ENCODE measurements at regions of chr12 and their contacts with region 1.

Region 1: DNA sequence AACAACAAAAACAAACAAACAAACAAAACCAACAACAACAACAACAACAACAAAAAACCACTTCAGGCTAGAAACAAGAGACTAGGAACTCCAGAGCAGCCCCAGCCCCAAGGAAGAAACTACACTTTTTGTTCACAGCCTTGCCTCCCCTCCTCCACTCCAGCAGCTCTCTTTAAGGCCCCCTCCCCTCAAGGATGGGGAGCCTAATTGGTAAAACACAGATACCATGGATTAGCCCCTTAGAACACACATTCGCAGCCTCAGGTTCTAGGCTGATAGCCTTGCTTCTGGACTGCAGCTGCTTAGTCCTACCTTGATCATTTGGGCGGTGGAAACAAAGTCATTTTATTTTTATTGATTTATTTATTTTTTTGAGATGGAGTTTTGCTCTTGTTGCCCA is 11.9 kb upstream of the AVIL start:
- DNase-seq: no peak
- H3K4me3 ChIP-seq: no peak overlapping the region
- H3K27ac ChIP-seq: peak overlapping the region in 1 of 4 donors; percentile 67
- H3K4me1 ChIP-seq: peaks cover 30 to 71% (median 65%) of the 10 kb centered on the region in 3 donors
- H3K27me3 ChIP-seq: no peaks in the 10 kb centered on the region
- CTCF ChIP-seq: no peak
- POLR2A ChIP-seq: no peak

Region 2: GRCh38 chr12:57795354-57795753 is 35.0 kb before region 1 on chr12:
- intact Hi-C with region 1: no loop called
- DNase-seq: no peak
- H3K4me3 ChIP-seq: no peak overlapping the region
- H3K27ac ChIP-seq: peak overlapping the region in 1 of 4 donors; percentile 48
- H3K4me1 ChIP-seq: peaks cover 0 to 24% (median 0%) of the 10 kb centered on the region in 3 donors
- H3K27me3 ChIP-seq: no peaks in the 10 kb centered on the region
- CTCF ChIP-seq: no peak
- POLR2A ChIP-seq: no peak

Region 3: GRCh38 chr12:57904848-57905811 is 74.7 kb after region 1 on chr12:
- intact Hi-C with region 1: loop called (anchors 2 kb)
- DNase-seq: peak; percentile 9
- H3K4me3 ChIP-seq: peak overlapping the region in 1 of 4 donors; percentile 39
- H3K27ac ChIP-seq: peak overlapping the region in 1 of 4 donors; percentile 35
- H3K4me1 ChIP-seq: peaks cover 0 to 10% (median 0%) of the 10 kb centered on the region in 3 donors
- H3K27me3 ChIP-seq: peaks cover 0 to 7% (median 0%) of the 10 kb centered on the region in 4 donors
- CTCF ChIP-seq: peak; percentile 99 to 100 (median 100)
- POLR2A ChIP-seq: no peak

Measured in esophagus squamous epithelium (tissue), 5 donors.